ENCODE measurements at regions of chrX and their contacts with region 1.

Region 1: GRCh38 chrX:48676106-48676892 is 7.3 kb upstream of the WAS start:
- DNase-seq: peak; percentile 89 to 92
- H3K4me3 ChIP-seq: peak overlapping the region; percentile 82
- H3K4me3 Mint-ChIP-seq: peak overlapping the region; percentile 71
- H3K27ac Mint-ChIP-seq: peak overlapping the region; percentile 74
- H3K4me1 ChIP-seq: no peaks in the 10 kb centered on the region
- H3K4me1 Mint-ChIP-seq: no peaks in the 10 kb centered on the region
- H3K27me3 ChIP-seq: no peaks in the 10 kb centered on the region
- H3K27me3 Mint-ChIP-seq: no peaks in the 10 kb centered on the region
- CTCF ChIP-seq: no peak

Region 2: GRCh38 chrX:48539345-48540027 is 136.8 kb before region 1 on chrX and contains the start of gene TBC1D25:
- CTCF ChIA-PET with region 1: no interaction called
- POLR2A ChIA-PET with region 1: interaction called, 13 read pairs
- intact Hi-C with region 1: no loop called
- DNase-seq: peak; percentile 96 to 98
- H3K4me3 ChIP-seq: peak within 1 kb of the TSS; percentile 68
- H3K4me3 Mint-ChIP-seq: peak within 1 kb of the TSS; percentile 87
- H3K27ac Mint-ChIP-seq: peak within 1 kb of the TSS; percentile 71
- H3K4me1 ChIP-seq: no peaks in the 10 kb centered on the region
- H3K4me1 Mint-ChIP-seq: peaks cover 8% of the 10 kb centered on the region
- H3K27me3 ChIP-seq: no peaks in the 10 kb centered on the region
- H3K27me3 Mint-ChIP-seq: no peaks in the 10 kb centered on the region
- CTCF ChIP-seq: peak in 1 of 2 experiments; percentile 27
- total RNA-seq, gene TBC1D25: 9.3 and 11.1 TPM in 2 replicates

Region 3: GRCh38 chrX:48648336-48648751 is 28.0 kb before region 1 on chrX:
- CTCF ChIA-PET with region 1: interaction called, 8 read pairs
- POLR2A ChIA-PET with region 1: interaction called, 4 read pairs
- intact Hi-C with region 1: loop called (anchors 2 kb)
- DNase-seq: peak in 1 of 2 experiments; percentile 20
- H3K4me3 ChIP-seq: no peak overlapping the region
- H3K4me3 Mint-ChIP-seq: no peak overlapping the region
- H3K27ac Mint-ChIP-seq: no peak overlapping the region
- H3K4me1 ChIP-seq: no peaks in the 10 kb centered on the region
- H3K4me1 Mint-ChIP-seq: peaks cover 6% of the 10 kb centered on the region
- H3K27me3 ChIP-seq: no peaks in the 10 kb centered on the region
- H3K27me3 Mint-ChIP-seq: no peaks in the 10 kb centered on the region
- CTCF ChIP-seq: no peak

Region 4: GRCh38 chrX:48696301-48697181 is 20.2 kb after region 1 on chrX and contains the start of gene SUV39H1:
- CTCF ChIA-PET with region 1: no interaction called
- POLR2A ChIA-PET with region 1: interaction called, 16 read pairs
- intact Hi-C with region 1: loop called (anchors 2 kb)
- DNase-seq: peak; percentile 85 to 89
- H3K4me3 ChIP-seq: peak within 1 kb of the TSS; percentile 69
- H3K4me3 Mint-ChIP-seq: peak within 1 kb of the TSS; percentile 85
- H3K27ac Mint-ChIP-seq: peak within 1 kb of the TSS; percentile 79
- H3K4me1 ChIP-seq: no peaks in the 10 kb centered on the region
- H3K4me1 Mint-ChIP-seq: peaks cover 7% of the 10 kb centered on the region
- H3K27me3 ChIP-seq: no peaks in the 10 kb centered on the region
- H3K27me3 Mint-ChIP-seq: no peaks in the 10 kb centered on the region
- CTCF ChIP-seq: no peak
- total RNA-seq, gene SUV39H1: 13.9 and 15.8 TPM in 2 replicates

Region 5: DNA sequence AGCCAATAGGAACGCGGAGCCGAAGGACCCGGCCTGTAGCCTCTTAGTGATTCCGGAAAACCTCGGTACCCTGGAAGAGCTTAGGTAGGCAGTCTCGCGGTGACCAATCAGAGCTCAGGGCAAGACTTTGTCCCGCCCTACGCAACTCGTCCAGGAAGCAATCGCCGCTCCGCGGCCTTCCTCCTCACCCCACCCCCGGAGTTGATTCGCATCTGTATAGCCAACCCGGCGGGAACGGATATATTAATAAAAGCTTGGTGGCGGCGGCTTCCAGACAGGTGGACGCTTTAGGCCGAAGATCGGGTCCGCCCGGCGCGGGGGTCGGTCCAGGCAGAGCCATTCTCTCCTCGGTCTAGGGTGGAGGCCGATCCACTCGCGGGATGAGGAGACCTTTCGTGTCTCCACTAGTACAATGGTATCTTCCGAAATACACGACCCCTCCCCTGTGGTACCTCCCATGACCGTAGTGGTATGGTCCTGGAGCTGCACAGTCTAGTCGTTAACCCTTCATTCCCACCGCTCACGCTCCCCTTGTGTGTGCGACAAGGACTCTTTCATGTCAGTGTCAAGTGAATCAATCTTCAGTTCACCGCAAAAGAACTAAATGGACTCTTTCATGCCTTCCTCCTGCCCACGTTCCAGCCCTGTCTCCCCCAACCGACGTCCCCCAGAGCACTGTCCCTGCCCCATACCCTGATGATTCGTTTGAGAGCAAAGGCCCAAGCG is 61.1 kb after region 1 on chrX:
- CTCF ChIA-PET with region 1: no interaction called
- POLR2A ChIA-PET with region 1: interaction called, 15 read pairs
- intact Hi-C with region 1: no loop called
- DNase-seq: peak; percentile 91 to 96
- H3K4me3 ChIP-seq: peak overlapping the region; percentile 56
- H3K4me3 Mint-ChIP-seq: peak overlapping the region; percentile 77
- H3K27ac Mint-ChIP-seq: peak overlapping the region; percentile 72
- H3K4me1 ChIP-seq: no peaks in the 10 kb centered on the region; the same call in 1 of the 2 replicates
- H3K4me1 Mint-ChIP-seq: peaks cover 6% of the 10 kb centered on the region
- H3K27me3 ChIP-seq: no peaks in the 10 kb centered on the region
- H3K27me3 Mint-ChIP-seq: no peaks in the 10 kb centered on the region
- CTCF ChIP-seq: no peak

Region 6: DNA sequence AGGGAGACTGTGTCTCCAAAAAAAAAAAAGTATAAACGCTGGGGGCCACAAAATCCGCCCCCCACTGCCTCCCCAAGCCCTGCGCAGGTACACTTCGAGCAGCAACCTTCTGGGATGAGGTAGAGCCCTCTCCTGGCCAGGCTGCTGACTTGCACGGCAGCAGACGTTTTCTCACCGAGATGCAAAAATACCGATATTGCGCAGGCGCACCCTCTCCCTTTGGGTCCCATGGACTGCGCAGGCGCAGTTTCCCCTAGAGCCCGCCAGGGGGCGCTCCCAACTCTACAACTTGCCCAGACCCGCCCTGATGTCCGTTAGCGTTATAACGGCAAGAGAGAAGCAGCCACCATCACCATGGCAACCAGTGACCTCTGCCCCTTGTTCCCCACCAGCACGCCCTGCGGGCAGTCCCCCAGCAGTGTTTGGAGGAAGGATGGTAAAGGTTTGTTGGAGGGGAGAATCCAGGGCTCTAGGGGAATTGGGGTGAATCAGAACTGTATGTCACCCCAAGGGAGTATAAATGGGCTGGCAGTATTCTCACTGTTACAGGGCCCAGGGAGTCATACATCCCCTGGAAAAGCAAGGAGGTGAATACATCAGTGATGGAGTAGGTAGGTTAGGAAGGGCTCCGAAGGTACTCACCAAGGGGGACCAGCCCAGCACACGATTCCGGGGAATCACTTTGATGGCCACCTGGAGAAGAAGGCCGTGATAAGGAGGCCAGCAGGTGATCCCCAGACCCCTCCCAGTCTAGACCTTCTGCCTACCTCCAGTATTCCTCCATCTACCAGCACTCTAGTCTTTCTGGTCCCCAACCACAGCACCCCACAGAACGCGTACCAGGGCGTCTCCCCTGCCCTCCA is 241.1 kb after region 1 on chrX:
- CTCF ChIA-PET with region 1: no interaction called
- POLR2A ChIA-PET with region 1: interaction called, 5 read pairs
- intact Hi-C with region 1: loop called (anchors 2 kb)
- DNase-seq: peak; percentile 87 to 88
- H3K4me3 ChIP-seq: peak overlapping the region; percentile 80
- H3K4me3 Mint-ChIP-seq: peak overlapping the region; percentile 91
- H3K27ac Mint-ChIP-seq: peak overlapping the region; percentile 90
- H3K4me1 ChIP-seq: peaks cover 10% of the 10 kb centered on the region; the same call in 1 of the 2 replicates
- H3K4me1 Mint-ChIP-seq: peaks cover 24% of the 10 kb centered on the region
- H3K27me3 ChIP-seq: no peaks in the 10 kb centered on the region
- H3K27me3 Mint-ChIP-seq: no peaks in the 10 kb centered on the region
- CTCF ChIP-seq: peak; percentile 80 to 84

Measured in Caco-2 (cell line).